Dorsolateral prefrontal cortex (tissue), 120 donors: ENCODE measurements at regions of chr10 and their contacts with region 1.

Region 1: DNA sequence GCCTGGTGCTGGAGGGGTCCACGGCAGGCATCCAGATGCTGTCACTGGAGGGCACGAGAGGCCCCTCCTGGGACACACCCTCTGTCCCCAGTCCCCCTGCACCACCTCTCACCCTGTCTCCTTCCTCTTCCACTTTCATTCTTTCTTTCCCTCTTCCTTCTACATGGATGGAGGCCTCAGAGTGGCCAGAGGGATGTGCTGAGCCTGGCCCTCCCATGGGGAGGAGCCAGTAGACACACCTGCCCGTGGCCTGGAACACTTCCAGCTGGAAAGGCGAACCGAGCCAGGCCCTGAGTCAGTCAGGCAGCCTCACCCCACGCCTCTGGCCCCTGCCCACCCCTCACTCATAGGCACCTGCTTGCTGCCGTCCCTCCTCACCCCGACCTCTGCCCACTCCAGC is 55.9 kb upstream of the MXI1 start:
- DNase-seq: no peak
- H3K4me3 ChIP-seq: no peak overlapping the region
- H3K27ac ChIP-seq: no peak overlapping the region
- H3K27me3 ChIP-seq: peaks cover 0 to 20% (median 0%) of the 10 kb centered on the region in 45 donors
- CTCF ChIP-seq: no peak

Region 2: GRCh38 chr10:110192552-110192951 is 41.1 kb after region 1 on chr10:
- intact Hi-C with region 1: loop called in 1 of 2 experiments (anchors 5 kb)
- DNase-seq: no peak
- H3K4me3 ChIP-seq: no peak overlapping the region
- H3K27ac ChIP-seq: no peak overlapping the region
- H3K27me3 ChIP-seq: peaks cover 0 to 3% (median 0%) of the 10 kb centered on the region in 45 donors
- CTCF ChIP-seq: no peak